Adrenal gland (tissue), 19 donors: ENCODE measurements at regions of chr20 and their contacts with region 1.

Region 1: GRCh38 chr20:5788385-5788895 is 38.2 kb downstream of the SHLD1 start:
- DNase-seq: peak; percentile 84 to 95 (median 86)
- H3K4me3 ChIP-seq: no peak overlapping the region
- H3K27ac ChIP-seq: no peak overlapping the region
- H3K4me1 ChIP-seq: peaks cover 21 to 22% of the 10 kb centered on the region in 2 donors
- H3K27me3 ChIP-seq: no peaks in the 10 kb centered on the region
- CTCF ChIP-seq: peak; percentile 90 to 96 (median 94)
- POLR2A ChIP-seq: no peak

Region 2: GRCh38 chr20:5570452-5570851 is 218.0 kb before region 1 on chr20:
- intact Hi-C with region 1: loop called (anchors 5 to 10 kb)
- DNase-seq: no peak
- H3K4me3 ChIP-seq: no peak overlapping the region
- H3K27ac ChIP-seq: peak overlapping the region in 2 of 5 donors; percentile 43 to 50
- H3K4me1 ChIP-seq: peaks cover 0 to 22% of the 10 kb centered on the region in 2 donors
- H3K27me3 ChIP-seq: no peaks in the 10 kb centered on the region
- CTCF ChIP-seq: no peak
- POLR2A ChIP-seq: no peak

Region 3: GRCh38 chr20:5586720-5587119 is 201.7 kb before region 1 on chr20:
- intact Hi-C with region 1: no loop called
- DNase-seq: no peak
- H3K4me3 ChIP-seq: no peak overlapping the region
- H3K27ac ChIP-seq: no peak overlapping the region
- H3K4me1 ChIP-seq: no peaks in the 10 kb centered on the region
- H3K27me3 ChIP-seq: no peaks in the 10 kb centered on the region
- CTCF ChIP-seq: no peak
- POLR2A ChIP-seq: no peak

Region 4: GRCh38 chr20:5918856-5919625 is 130.6 kb after region 1 on chr20:
- intact Hi-C with region 1: no loop called
- DNase-seq: no peak
- H3K4me3 ChIP-seq: no peak overlapping the region
- H3K27ac ChIP-seq: no peak overlapping the region
- H3K4me1 ChIP-seq: no peaks in the 10 kb centered on the region
- H3K27me3 ChIP-seq: no peaks in the 10 kb centered on the region
- CTCF ChIP-seq: no peak
- POLR2A ChIP-seq: no peak

Region 5: GRCh38 chr20:5950271-5951031 is 162.0 kb after region 1 on chr20 and contains the starts of genes MCM8 and TRMT6:
- intact Hi-C with region 1: no loop called
- DNase-seq: peak; percentile 94 to 99 (median 97)
- H3K4me3 ChIP-seq: peak within 1 kb of the TSS; percentile 34 to 90 (median 74)
- H3K27ac ChIP-seq: peak within 1 kb of the TSS; percentile 62 to 82 (median 76)
- H3K4me1 ChIP-seq: peaks cover 7 to 23% of the 10 kb centered on the region in 2 donors
- H3K27me3 ChIP-seq: no peaks in the 10 kb centered on the region
- CTCF ChIP-seq: no peak
- POLR2A ChIP-seq: peak in 1 of 2 donors; percentile 73
- total RNA-seq, gene MCM8: 1.8 to 12.6 (median 6.2) TPM
- total RNA-seq, gene TRMT6: 8.9 to 18.8 (median 15.3) TPM

Region 6: DNA sequence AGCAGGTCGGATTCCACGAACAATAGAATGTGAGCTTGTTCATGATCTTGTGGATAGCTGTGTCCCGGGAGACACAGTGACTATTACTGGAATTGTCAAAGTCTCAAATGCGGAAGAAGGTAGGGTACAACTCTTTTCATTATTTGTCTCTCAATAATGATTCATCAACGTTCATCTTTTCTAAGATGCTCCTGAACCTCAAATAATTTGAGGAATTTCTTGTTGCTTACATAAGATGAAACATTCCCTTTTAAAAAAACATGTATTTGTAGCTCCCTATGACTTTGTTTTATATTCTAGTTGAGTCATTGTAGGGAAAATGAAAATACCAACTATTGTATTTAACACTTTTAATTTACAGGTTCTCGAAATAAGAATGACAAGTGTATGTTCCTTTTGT is 179.0 kb after region 1 on chr20:
- intact Hi-C with region 1: no loop called
- DNase-seq: no peak
- H3K4me3 ChIP-seq: no peak overlapping the region
- H3K27ac ChIP-seq: no peak overlapping the region
- H3K4me1 ChIP-seq: no peaks in the 10 kb centered on the region
- H3K27me3 ChIP-seq: no peaks in the 10 kb centered on the region
- CTCF ChIP-seq: no peak
- POLR2A ChIP-seq: no peak